ENCODE measurements at regions of chr4 and their contacts with region 1.

Region 1: DNA sequence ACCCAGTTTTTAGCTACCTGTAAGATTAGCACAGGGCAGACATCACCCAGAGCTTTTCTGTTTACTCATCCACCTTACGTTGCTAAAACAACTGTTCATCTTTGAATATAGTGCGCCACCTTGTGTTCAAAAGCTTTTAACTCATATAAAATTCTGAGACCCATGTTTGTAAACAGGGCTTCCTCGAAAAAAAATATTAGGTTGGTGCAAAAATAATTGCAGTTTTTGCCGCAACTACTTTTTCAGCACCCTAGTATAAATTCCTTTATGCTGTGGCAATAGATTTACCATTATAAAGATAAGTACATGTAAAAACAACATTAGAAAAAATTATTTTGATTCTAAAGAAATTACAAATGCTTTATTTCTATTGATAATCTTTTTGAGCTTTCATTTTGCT is 147.9 kb downstream of the LRBA start:
- DNase-seq: no peak
- H3K4me3 ChIP-seq: no peak overlapping the region
- H3K27ac ChIP-seq: no peak overlapping the region
- H3K4me1 ChIP-seq: no peaks in the 10 kb centered on the region
- H3K27me3 ChIP-seq: no peaks in the 10 kb centered on the region
- CTCF ChIP-seq: peak in 2 of 3 experiments; percentile 35 to 50; a peak in 2 of 4 replicates
- EP300 ChIP-seq: no peak
- POLR2A ChIP-seq: no peak
- RAD21 ChIP-seq: peak; percentile 73 to 75

Region 2: GRCh38 chr4:150855981-150856510 is 11.1 kb before region 1 on chr4:
- CTCF ChIA-PET with region 1: interaction called, 10 read pairs
- POLR2A ChIA-PET with region 1: interaction called, 5 read pairs
- DNase-seq: no peak
- H3K4me3 ChIP-seq: no peak overlapping the region
- H3K27ac ChIP-seq: no peak overlapping the region
- H3K4me1 ChIP-seq: no peaks in the 10 kb centered on the region
- H3K27me3 ChIP-seq: no peaks in the 10 kb centered on the region
- CTCF ChIP-seq: no peak
- EP300 ChIP-seq: no peak
- POLR2A ChIP-seq: no peak
- RAD21 ChIP-seq: no peak

Region 3: GRCh38 chr4:150923945-150924344 is 56.8 kb after region 1 on chr4:
- CTCF ChIA-PET with region 1: no interaction called
- POLR2A ChIA-PET with region 1: no interaction called
- DNase-seq: no peak
- H3K4me3 ChIP-seq: no peak overlapping the region
- H3K27ac ChIP-seq: no peak overlapping the region
- H3K4me1 ChIP-seq: no peaks in the 10 kb centered on the region
- H3K27me3 ChIP-seq: no peaks in the 10 kb centered on the region
- CTCF ChIP-seq: no peak
- EP300 ChIP-seq: no peak
- POLR2A ChIP-seq: no peak
- RAD21 ChIP-seq: no peak